MCF 10A (cell line): ENCODE measurements at regions of chr3 and their contacts with region 1.

Region 1: GRCh38 chr3:152719264-152719663 is 115.7 kb upstream of the P2RY1 start:
- DNase-seq: peak; percentile 78
- H3K4me3 Mint-ChIP-seq: no peak overlapping the region
- H3K27ac Mint-ChIP-seq: peak overlapping the region; percentile 64
- H3K4me1 Mint-ChIP-seq: peaks cover 11% of the 10 kb centered on the region
- H3K27me3 Mint-ChIP-seq: no peaks in the 10 kb centered on the region
- CTCF ChIP-seq: no peak

Region 2: GRCh38 chr3:152703245-152703890 is 15.9 kb before region 1 on chr3:
- CTCF ChIA-PET with region 1: no interaction called
- POLR2A ChIA-PET with region 1: interaction called, 10 read pairs
- intact Hi-C with region 1: no loop called
- DNase-seq: peak; percentile 9
- H3K4me3 Mint-ChIP-seq: no peak overlapping the region
- H3K27ac Mint-ChIP-seq: no peak overlapping the region
- H3K4me1 Mint-ChIP-seq: no peaks in the 10 kb centered on the region
- H3K27me3 Mint-ChIP-seq: no peaks in the 10 kb centered on the region
- CTCF ChIP-seq: no peak